ENCODE measurements at regions of chr10 and their contacts with region 1.

Region 1: DNA sequence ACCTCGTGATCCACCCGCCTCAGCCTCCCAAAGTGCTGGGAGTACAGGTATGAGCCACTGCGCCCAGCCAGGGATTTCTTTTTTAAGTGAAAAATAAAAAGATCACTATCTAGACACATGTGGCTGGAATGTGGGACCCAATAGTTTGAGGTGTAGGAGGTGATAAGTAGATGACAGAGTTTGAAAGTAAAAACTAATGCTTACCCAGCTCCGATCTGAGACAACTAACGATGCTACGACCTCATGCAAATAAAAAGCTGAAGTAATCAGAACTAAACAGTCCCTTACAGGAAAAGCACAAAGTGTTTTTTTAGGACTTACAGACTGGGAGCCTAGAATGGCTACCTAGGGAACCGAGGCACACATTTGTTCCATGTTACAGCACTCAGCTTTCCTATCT is 23.0 kb downstream of the PCGF6 start:
- DNase-seq: no peak
- ATAC-seq: no peak
- H3K4me3 ChIP-seq: no peak overlapping the region
- H3K27ac ChIP-seq: no peak overlapping the region
- H3K4me1 ChIP-seq: no peaks in the 10 kb centered on the region
- H3K27me3 ChIP-seq: no peaks in the 10 kb centered on the region
- CTCF ChIP-seq: no peak

Region 2: GRCh38 chr10:102743078-102743587 is 584.8 kb before region 1 on chr10:
- CTCF ChIA-PET with region 1: no interaction called
- POLR2A ChIA-PET with region 1: interaction called, 26 read pairs
- intact Hi-C with region 1: no loop called
- DNase-seq: no peak
- ATAC-seq: no peak
- H3K4me3 ChIP-seq: peak overlapping the region; percentile 51
- H3K27ac ChIP-seq: no peak overlapping the region
- H3K4me1 ChIP-seq: peaks cover 14% of the 10 kb centered on the region; the same call in 1 of the 2 replicates
- H3K27me3 ChIP-seq: no peaks in the 10 kb centered on the region
- CTCF ChIP-seq: no peak

Region 3: GRCh38 chr10:102894466-102895213 is 433.3 kb before region 1 on chr10:
- CTCF ChIA-PET with region 1: no interaction called
- POLR2A ChIA-PET with region 1: no interaction called
- intact Hi-C with region 1: no loop called
- DNase-seq: no peak
- ATAC-seq: no peak
- H3K4me3 ChIP-seq: no peak overlapping the region
- H3K27ac ChIP-seq: no peak overlapping the region
- H3K4me1 ChIP-seq: no peaks in the 10 kb centered on the region
- H3K27me3 ChIP-seq: no peaks in the 10 kb centered on the region
- CTCF ChIP-seq: no peak

Measured in PC-3 (cell line).